ENCODE measurements at regions of chr20 and their contacts with region 1.

Region 1: DNA sequence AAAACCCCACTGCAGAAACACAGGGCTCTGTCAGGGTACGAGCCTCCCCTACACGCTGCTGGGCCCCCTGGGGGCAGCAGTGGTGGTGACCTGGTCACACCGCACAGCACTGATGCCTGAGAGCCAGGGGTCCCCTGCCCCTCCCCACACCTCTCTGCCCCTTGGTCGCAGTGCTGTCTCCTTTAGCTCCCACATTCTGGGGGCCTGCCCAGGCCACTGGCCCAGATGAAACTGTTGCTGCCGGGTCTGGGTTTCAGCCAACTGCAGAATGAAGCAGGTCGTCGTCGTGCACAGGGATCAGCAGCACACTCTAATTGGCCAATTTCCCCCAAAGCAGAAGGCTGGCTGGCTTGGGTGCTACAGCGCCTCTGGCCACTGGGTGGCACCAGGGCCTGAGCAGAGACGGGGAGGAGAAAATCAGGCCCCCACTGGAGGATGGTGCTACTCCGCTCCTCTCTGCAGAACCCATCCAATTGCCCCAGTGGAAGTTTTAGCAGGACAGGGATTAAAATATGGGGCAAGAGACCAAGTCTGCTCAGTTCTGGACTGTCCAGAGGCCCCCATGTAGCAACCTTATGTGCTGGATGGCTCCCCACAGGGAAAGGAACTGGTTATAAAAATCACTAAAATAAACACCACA is 26.1 kb downstream of the DIDO1 start:
- DNase-seq: peak; percentile 60 to 84 (median 71)
- H3K4me3 ChIP-seq: no peak overlapping the region
- H3K4me3 Mint-ChIP-seq: peak overlapping the region in 5 of 7 donors; percentile 13 to 72 (median 59)
- H3K27ac ChIP-seq: no peak overlapping the region
- H3K27ac Mint-ChIP-seq: peak overlapping the region in 7 of 8 donors; percentile 78 to 86 (median 84)
- H3K4me1 ChIP-seq: peaks cover 24% of the 10 kb centered on the region
- H3K4me1 Mint-ChIP-seq: peaks cover 32 to 37% (median 35%) of the 10 kb centered on the region in 3 donors
- H3K27me3 ChIP-seq: no peaks in the 10 kb centered on the region
- H3K27me3 Mint-ChIP-seq: no peaks in the 10 kb centered on the region

Region 2: GRCh38 chr20:62921119-62921687 is 21.0 kb after region 1 on chr20:
- CTCF ChIA-PET with region 1: interaction called, 62 read pairs
- POLR2A ChIA-PET with region 1: interaction called, 8 read pairs
- DNase-seq: peak; percentile 58 to 74 (median 63)
- H3K4me3 ChIP-seq: no peak overlapping the region
- H3K4me3 Mint-ChIP-seq: peak overlapping the region; percentile 73 to 90 (median 82)
- H3K27ac ChIP-seq: no peak overlapping the region
- H3K27ac Mint-ChIP-seq: peak overlapping the region; percentile 85 to 95 (median 93)
- H3K4me1 ChIP-seq: peaks cover 85% of the 10 kb centered on the region
- H3K4me1 Mint-ChIP-seq: peaks cover 76 to 90% (median 89%) of the 10 kb centered on the region in 3 donors
- H3K27me3 ChIP-seq: no peaks in the 10 kb centered on the region
- H3K27me3 Mint-ChIP-seq: peaks cover 0 to 3% of the 10 kb centered on the region in 2 donors

Region 3: DNA sequence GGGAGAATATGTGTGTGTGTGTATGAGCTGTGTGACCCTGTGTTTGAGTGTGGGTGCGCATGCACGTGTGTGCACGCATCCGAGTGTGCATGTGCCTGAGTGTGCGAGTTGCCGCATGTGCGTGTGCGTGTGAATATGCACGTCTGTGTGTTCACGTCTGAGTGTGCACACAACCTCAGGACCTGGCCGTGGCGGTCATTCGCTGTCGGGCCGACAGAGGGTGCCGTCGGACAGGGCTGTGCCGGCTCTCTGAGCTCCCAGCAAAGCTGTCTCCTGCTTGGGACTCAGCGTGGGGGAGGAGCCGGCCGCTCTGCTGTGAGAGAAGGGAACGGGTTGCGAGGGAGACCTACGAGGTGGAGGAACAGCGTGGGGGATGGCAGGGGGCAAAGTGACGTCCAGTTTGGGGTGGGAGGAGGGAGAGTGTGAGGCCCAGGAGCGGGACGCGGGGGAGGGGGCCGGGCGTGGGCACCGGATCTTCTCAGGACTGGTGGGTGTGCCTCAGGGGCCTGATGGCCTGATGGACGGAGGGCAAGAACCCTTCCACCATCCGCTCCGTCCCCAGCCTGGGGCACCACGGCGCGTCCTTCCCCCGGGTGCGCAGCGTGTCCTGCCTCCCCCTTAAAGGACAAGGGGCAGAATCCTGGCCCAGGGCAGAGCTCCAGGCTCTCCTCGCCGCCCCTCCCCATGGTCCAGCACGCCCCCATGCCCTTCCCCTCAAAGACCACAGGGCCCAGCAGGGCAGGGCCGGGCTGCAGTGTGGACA is 72.3 kb after region 1 on chr20:
- CTCF ChIA-PET with region 1: interaction called, 10 read pairs
- POLR2A ChIA-PET with region 1: no interaction called
- DNase-seq: peak; percentile 73 to 89 (median 76)
- H3K4me3 ChIP-seq: no peak overlapping the region
- H3K4me3 Mint-ChIP-seq: peak overlapping the region in 6 of 7 donors; percentile 49 to 86 (median 76)
- H3K27ac ChIP-seq: no peak overlapping the region
- H3K27ac Mint-ChIP-seq: peak overlapping the region in 6 of 8 donors; percentile 10 to 75 (median 43)
- H3K4me1 ChIP-seq: peaks cover 16% of the 10 kb centered on the region
- H3K4me1 Mint-ChIP-seq: peaks cover 16 to 32% (median 17%) of the 10 kb centered on the region in 3 donors
- H3K27me3 ChIP-seq: peaks cover 28% of the 10 kb centered on the region
- H3K27me3 Mint-ChIP-seq: peaks cover 42 to 48% of the 10 kb centered on the region in 2 donors

Region 4: GRCh38 chr20:63009045-63009961 is 109.1 kb after region 1 on chr20:
- CTCF ChIA-PET with region 1: interaction called, 18 read pairs
- POLR2A ChIA-PET with region 1: no interaction called
- DNase-seq: peak; percentile 75 to 86 (median 78)
- H3K4me3 ChIP-seq: peak overlapping the region; percentile 34
- H3K4me3 Mint-ChIP-seq: peak overlapping the region in 6 of 7 donors; percentile 3 to 95 (median 90)
- H3K27ac ChIP-seq: no peak overlapping the region
- H3K27ac Mint-ChIP-seq: peak overlapping the region in 5 of 8 donors; percentile 5 to 94 (median 90)
- H3K4me1 ChIP-seq: peaks cover 27% of the 10 kb centered on the region
- H3K4me1 Mint-ChIP-seq: peaks cover 14 to 40% (median 21%) of the 10 kb centered on the region in 3 donors
- H3K27me3 ChIP-seq: peaks cover 49% of the 10 kb centered on the region
- H3K27me3 Mint-ChIP-seq: peaks cover 39 to 48% of the 10 kb centered on the region in 2 donors

Measured in CD8-positive, alpha-beta memory T cell (primary cell).